MCF 10A (cell line): ENCODE measurements at regions of chr1 and their contacts with region 1.

Region 1: DNA sequence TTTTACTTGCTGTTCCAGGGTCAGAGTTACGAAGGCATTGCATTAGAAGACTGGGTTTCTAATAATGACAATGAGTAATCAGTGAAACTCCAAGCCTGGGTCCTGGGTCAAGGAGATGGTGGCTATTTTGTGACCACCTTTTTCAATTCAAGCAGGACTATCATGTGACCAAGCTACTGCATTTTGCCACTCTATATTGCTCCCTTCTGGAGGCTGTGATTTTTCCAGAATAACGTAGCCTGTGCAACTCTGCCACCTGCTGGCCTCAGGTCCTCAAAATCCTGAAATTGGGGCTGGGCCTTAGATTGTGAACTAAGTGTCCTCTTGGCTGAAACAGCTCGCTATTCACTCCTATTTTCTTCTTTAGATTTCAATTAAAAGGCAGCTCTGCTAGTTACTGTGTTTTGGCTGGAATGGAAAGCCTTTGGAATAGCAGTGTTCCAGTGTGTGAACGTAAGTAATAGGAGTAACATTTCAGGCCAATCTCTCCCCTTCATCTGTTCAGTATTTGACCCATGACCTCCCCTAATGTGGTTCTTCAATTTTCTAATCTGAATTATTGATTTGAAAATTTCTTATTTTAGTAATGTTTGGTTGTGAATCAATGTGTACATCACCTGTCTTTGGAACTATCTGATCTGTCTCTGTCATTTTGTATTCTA is 52.9 kb upstream of the CD46 start:
- DNase-seq: peak; percentile 86
- H3K4me3 Mint-ChIP-seq: no peak overlapping the region
- H3K27ac Mint-ChIP-seq: no peak overlapping the region
- H3K4me1 Mint-ChIP-seq: peaks cover 10% of the 10 kb centered on the region
- H3K27me3 Mint-ChIP-seq: no peaks in the 10 kb centered on the region
- CTCF ChIP-seq: peak; percentile 97

Region 2: DNA sequence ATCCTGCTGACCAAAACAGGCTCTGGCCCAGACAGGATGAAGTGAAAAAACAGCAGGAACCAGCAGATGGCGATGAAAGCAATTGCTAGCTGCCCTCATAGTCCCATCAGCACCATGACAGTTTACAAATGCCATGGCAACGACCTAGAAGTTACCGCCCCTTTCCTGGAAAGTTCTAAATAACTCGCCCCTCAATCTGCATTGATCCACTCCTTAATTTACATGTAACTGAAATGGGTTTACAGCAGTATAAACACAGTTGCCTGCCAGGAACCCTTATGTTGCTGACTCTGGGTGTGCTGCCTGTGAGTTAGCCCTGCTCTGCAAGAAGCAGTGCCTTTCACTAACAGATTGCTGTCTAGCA is 119.5 kb before region 1 on chr1:
- CTCF ChIA-PET with region 1: interaction called, 95 read pairs
- POLR2A ChIA-PET with region 1: interaction called, 10 read pairs
- intact Hi-C with region 1: loop called (anchors 1 kb)
- DNase-seq: peak; percentile 83
- H3K4me3 Mint-ChIP-seq: no peak overlapping the region
- H3K27ac Mint-ChIP-seq: no peak overlapping the region
- H3K4me1 Mint-ChIP-seq: no peaks in the 10 kb centered on the region
- H3K27me3 Mint-ChIP-seq: peaks cover 25% of the 10 kb centered on the region
- CTCF ChIP-seq: peak; percentile 74

Region 3: GRCh38 chr1:207654320-207654719 is 44.6 kb before region 1 on chr1:
- CTCF ChIA-PET with region 1: interaction called, 17 read pairs
- POLR2A ChIA-PET with region 1: interaction called, 3 read pairs
- intact Hi-C with region 1: loop called (anchors 1 kb)
- DNase-seq: no peak
- H3K4me3 Mint-ChIP-seq: no peak overlapping the region
- H3K27ac Mint-ChIP-seq: no peak overlapping the region
- H3K4me1 Mint-ChIP-seq: no peaks in the 10 kb centered on the region
- H3K27me3 Mint-ChIP-seq: peaks cover 15% of the 10 kb centered on the region
- CTCF ChIP-seq: peak; percentile 28

Region 4: DNA sequence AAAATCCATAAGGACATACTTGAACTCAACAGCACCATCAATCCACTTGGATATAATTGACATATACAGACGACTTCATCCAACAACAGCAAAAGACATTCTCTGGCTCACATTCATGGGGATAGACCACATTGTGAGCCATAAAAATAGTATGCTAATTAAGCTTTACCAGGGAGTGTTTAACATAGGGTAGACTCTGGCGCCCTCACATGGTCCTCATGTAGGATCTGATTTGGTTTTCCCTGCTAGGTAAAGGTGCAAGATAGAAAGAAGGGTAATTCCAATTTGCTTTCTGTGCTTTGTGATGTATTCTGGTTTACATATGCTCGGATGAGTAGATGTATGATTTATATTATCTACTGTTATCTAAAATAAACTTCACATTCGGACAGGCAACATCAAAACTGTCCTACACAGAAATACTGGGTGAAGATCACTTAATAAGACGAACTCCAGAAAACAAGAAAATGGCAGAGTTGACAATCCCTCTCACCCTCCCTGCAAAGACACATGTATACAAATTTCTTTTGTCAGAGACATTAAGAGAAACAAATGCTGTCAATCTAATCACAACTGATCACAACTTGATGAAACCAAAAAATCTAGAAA is 26.3 kb before region 1 on chr1:
- CTCF ChIA-PET with region 1: interaction called, 19 read pairs
- POLR2A ChIA-PET with region 1: no interaction called
- intact Hi-C with region 1: no loop called
- DNase-seq: peak; percentile 86
- H3K4me3 Mint-ChIP-seq: no peak overlapping the region
- H3K27ac Mint-ChIP-seq: no peak overlapping the region
- H3K4me1 Mint-ChIP-seq: peaks cover 12% of the 10 kb centered on the region
- H3K27me3 Mint-ChIP-seq: peaks cover 75% of the 10 kb centered on the region
- CTCF ChIP-seq: peak; percentile 90

Region 5: GRCh38 chr1:207711285-207711684 is 12.3 kb after region 1 on chr1:
- CTCF ChIA-PET with region 1: interaction called, 23 read pairs
- POLR2A ChIA-PET with region 1: interaction called, 3 read pairs
- intact Hi-C with region 1: no loop called
- DNase-seq: peak; percentile 74
- H3K4me3 Mint-ChIP-seq: no peak overlapping the region
- H3K27ac Mint-ChIP-seq: no peak overlapping the region
- H3K4me1 Mint-ChIP-seq: peaks cover 25% of the 10 kb centered on the region
- H3K27me3 Mint-ChIP-seq: no peaks in the 10 kb centered on the region
- CTCF ChIP-seq: peak; percentile 19

Region 6: DNA sequence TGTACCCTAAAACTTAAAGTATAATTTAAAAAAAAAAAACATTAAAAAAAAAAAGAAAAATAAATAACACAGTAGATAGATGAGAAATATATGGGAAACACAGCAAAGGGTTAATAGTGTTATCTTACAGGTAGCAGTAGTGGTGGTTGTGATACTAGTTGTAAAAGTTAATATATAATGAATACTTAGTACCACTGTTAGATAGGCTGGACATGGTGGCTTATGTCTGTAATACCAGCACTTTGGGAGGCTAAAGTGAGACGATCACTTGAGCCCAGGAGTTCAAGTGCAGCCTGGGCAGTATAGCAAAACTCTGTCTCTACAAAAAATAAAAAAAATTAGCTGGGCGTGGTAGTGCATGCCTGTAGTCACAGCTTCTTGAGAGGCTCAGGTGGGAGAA is 20.3 kb after region 1 on chr1:
- CTCF ChIA-PET with region 1: interaction called, 13 read pairs
- POLR2A ChIA-PET with region 1: interaction called, 3 read pairs
- intact Hi-C with region 1: no loop called
- DNase-seq: no peak
- H3K4me3 Mint-ChIP-seq: no peak overlapping the region
- H3K27ac Mint-ChIP-seq: no peak overlapping the region
- H3K4me1 Mint-ChIP-seq: no peaks in the 10 kb centered on the region
- H3K27me3 Mint-ChIP-seq: no peaks in the 10 kb centered on the region
- CTCF ChIP-seq: no peak

Region 7: GRCh38 chr1:207740224-207740623 is 41.3 kb after region 1 on chr1:
- CTCF ChIA-PET with region 1: interaction called, 11 read pairs
- POLR2A ChIA-PET with region 1: interaction called, 5 read pairs
- intact Hi-C with region 1: no loop called
- DNase-seq: peak; percentile 97
- H3K4me3 Mint-ChIP-seq: no peak overlapping the region
- H3K27ac Mint-ChIP-seq: peak overlapping the region; percentile 73
- H3K4me1 Mint-ChIP-seq: peaks cover 43% of the 10 kb centered on the region
- H3K27me3 Mint-ChIP-seq: no peaks in the 10 kb centered on the region
- CTCF ChIP-seq: no peak